IMR-90 (cell line): ENCODE measurements at regions of chr12 and their contacts with region 1.

Region 1: GRCh38 chr12:51424662-51425438 is at the start of gene SLC4A8:
- DNase-seq: peak; percentile 85
- ATAC-seq: peak; percentile 99
- H3K4me3 ChIP-seq: peak within 1 kb of the TSS; percentile 77
- H3K27ac ChIP-seq: no peak within 1 kb of the TSS
- H3K4me1 ChIP-seq: no peaks in the 10 kb centered on the region
- H3K27me3 ChIP-seq: no peaks in the 10 kb centered on the region
- CTCF ChIP-seq: peak; percentile 86
- POLR2A ChIP-seq: no peak
- RAD21 ChIP-seq: peak; percentile 77
- total RNA-seq, gene SLC4A8: 4.4 and 5.2 TPM in 2 replicates

Region 2: DNA sequence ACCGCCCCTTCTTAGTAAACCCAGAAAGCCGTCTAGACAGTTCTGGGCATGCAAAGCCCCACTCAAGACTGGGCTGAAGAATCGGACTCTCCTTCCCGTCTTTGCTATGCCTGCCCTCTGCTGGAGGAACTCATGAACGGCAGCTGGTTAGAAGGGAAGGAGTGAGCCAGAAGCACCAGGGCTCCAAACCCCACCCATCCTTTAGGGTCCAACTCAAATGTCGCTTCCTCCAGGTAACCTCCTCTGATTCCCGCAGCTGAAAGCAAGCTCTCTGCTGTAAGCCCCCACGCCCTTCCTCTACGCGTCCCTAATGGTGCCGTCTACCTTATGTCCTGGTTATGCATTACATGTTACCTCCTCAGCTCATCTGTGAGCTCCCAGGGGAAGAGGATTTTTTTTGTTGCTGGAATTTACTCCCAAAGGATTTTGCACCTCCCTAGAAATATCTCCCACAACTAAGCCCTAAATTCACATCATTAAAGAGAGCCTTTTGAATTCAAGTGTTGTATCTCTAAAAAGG is 107.2 kb after region 1 on chr12:
- CTCF ChIA-PET with region 1: interaction called, 12 read pairs
- POLR2A ChIA-PET with region 1: no interaction called
- dilution Hi-C with region 1: no loop called
- in situ Hi-C with region 1: loop called (anchors 5 kb)
- intact Hi-C with region 1: loop called (anchors 1 kb)
- DNase-seq: peak; percentile 76
- ATAC-seq: peak; percentile 92
- H3K4me3 ChIP-seq: no peak overlapping the region
- H3K27ac ChIP-seq: no peak overlapping the region
- H3K4me1 ChIP-seq: peaks cover 5% of the 10 kb centered on the region; the same call in 1 of the 2 replicates
- H3K27me3 ChIP-seq: no peaks in the 10 kb centered on the region
- CTCF ChIP-seq: peak; percentile 89
- POLR2A ChIP-seq: no peak
- RAD21 ChIP-seq: peak; percentile 90

Region 3: GRCh38 chr12:51678086-51678724 is 253.4 kb after region 1 on chr12:
- CTCF ChIA-PET with region 1: no interaction called
- POLR2A ChIA-PET with region 1: no interaction called
- dilution Hi-C with region 1: no loop called
- in situ Hi-C with region 1: loop called (anchors 10 kb)
- intact Hi-C with region 1: loop called (anchors 10 kb)
- DNase-seq: peak; percentile 67
- ATAC-seq: peak; percentile 94
- H3K4me3 ChIP-seq: no peak overlapping the region
- H3K27ac ChIP-seq: no peak overlapping the region
- H3K4me1 ChIP-seq: no peaks in the 10 kb centered on the region
- H3K27me3 ChIP-seq: no peaks in the 10 kb centered on the region
- CTCF ChIP-seq: peak; percentile 68
- POLR2A ChIP-seq: no peak
- RAD21 ChIP-seq: peak; percentile 73

Region 4: DNA sequence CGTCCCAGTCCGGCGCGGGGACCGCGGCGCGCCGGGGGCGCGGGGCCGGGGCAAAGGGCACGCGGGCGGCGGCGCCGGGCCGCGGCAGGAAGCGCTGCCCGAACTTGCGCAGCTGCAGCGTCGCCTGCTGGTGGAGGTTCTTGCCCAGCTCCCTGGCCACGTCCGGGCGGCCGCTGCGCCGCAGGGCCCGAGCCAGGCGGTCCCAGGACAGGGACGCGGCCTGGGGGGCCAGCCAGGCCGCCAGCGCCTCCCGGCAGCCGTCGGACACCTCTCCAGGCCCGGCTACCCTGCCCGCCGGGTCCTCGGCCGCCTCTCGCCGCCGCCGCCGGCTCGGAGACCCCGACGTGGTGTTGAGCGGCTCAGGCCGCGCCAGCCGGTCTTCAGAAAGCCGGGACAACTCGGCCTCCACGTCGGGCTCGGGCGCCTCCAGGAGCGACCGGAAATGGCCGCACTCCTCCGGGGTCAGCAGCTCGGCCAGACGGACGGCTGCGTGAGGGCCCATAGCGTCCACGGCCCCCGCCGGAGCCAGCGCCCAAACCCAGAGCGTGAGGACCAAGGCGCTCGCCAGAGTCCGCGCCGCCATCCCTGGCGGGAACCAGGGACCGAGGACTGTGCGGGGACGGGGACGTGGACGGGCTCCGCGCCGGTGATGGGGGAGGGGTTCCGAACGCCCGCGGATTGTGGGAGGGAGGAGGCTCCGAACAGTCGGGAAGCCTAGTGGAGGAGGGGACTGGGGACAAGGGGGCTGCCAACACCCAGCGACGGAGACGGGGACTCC is 389.6 kb after region 1 on chr12:
- CTCF ChIA-PET with region 1: no interaction called
- POLR2A ChIA-PET with region 1: no interaction called
- dilution Hi-C with region 1: no loop called
- in situ Hi-C with region 1: no loop called
- intact Hi-C with region 1: loop called (anchors 2 kb)
- DNase-seq: peak; percentile 66
- ATAC-seq: peak; percentile 88
- H3K4me3 ChIP-seq: peak overlapping the region; percentile 54
- H3K27ac ChIP-seq: no peak overlapping the region; the same call in 1 of the 2 replicates
- H3K4me1 ChIP-seq: peaks cover 8% of the 10 kb centered on the region; the same call in 1 of the 2 replicates
- H3K27me3 ChIP-seq: no peaks in the 10 kb centered on the region; the same call in 1 of the 2 replicates
- CTCF ChIP-seq: peak; percentile 70
- POLR2A ChIP-seq: no peak
- RAD21 ChIP-seq: peak; percentile 72

Region 5: DNA sequence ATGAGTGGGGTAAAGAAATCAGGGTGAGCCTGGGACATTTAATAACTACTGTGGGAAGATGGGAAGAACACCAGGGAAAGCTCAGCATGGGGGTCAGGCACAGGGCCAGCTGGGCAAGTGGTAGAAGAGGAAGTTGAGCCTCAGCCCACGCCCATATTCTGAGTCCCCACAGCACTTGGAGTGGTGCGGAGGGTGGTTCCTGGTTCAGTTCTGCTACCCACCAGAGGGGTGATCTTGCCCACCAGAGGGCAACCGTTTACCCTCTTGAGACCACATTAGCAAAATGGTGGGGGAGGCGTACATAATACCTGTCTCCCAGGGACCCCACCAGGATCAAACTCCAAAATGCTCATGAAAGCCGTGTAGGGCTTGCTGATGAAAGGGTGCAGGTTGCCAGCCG is 446.3 kb after region 1 on chr12:
- CTCF ChIA-PET with region 1: interaction called, 11 read pairs
- POLR2A ChIA-PET with region 1: no interaction called
- dilution Hi-C with region 1: no loop called
- in situ Hi-C with region 1: loop called (anchors 5 kb)
- intact Hi-C with region 1: loop called (anchors 1 kb)
- DNase-seq: no peak
- ATAC-seq: no peak
- H3K4me3 ChIP-seq: no peak overlapping the region
- H3K27ac ChIP-seq: no peak overlapping the region
- H3K4me1 ChIP-seq: peaks cover 2% of the 10 kb centered on the region; the same call in 1 of the 2 replicates
- H3K27me3 ChIP-seq: peaks cover 37% of the 10 kb centered on the region
- CTCF ChIP-seq: no peak
- POLR2A ChIP-seq: no peak
- RAD21 ChIP-seq: no peak